B cell (primary cell): ENCODE measurements at regions of chr7 and their contacts with region 1.

Region 1: DNA sequence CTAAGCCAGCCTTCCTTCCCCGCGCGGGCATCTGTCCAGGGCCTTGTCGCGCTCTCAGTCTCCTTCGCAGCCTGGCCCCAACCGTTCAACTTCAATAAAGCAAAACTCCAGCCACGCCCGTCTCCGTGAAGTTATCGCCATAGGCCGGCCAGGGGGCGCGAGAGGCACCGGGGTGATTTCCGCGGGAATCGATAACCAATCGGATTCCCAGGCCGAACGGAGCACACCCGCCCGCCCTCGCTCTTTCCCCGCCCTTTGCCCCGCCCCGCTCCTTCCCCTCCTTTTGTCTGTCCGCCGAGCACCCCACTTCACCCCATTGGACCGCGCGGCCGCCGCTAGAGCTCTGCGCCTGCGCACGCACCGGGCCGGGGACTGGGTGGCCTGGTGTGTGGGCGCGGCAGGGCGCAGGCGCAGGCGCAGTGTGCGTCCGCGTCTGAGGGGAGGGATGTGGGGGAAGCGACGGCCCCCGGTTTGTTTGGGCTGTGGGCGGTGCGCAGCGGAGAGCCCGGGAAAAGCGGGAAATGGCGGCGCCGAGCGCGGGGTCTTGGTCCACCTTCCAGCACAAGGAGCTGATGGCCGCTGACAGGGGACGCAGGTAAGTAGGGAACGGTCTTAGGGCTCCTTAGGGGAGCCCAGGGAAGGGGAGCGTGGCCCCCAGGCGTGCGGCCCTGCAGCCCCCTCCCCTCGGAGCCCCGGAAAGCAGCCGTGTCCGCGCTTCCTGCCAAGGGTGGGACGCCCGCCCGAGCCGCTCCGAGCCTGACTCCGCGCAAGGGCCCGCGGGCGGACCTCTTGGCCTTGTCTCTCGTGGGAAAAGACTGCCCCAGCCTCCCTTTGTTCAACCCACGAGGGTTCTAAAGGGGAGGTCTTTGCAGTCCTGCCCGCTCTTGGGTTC is at the start of gene CASP2:
- DNase-seq: peak; percentile 99
- ATAC-seq: peak; percentile 90
- H3K4me3 ChIP-seq: peak within 1 kb of the TSS; percentile 73 to 95 (median 91)
- H3K4me3 Mint-ChIP-seq: peak within 1 kb of the TSS; percentile 95
- H3K27ac ChIP-seq: peak within 1 kb of the TSS; percentile 82 to 86
- H3K27ac Mint-ChIP-seq: peak within 1 kb of the TSS; percentile 84
- H3K4me1 ChIP-seq: peaks cover 42 to 43% of the 10 kb centered on the region in 2 donors
- H3K4me1 Mint-ChIP-seq: peaks cover 59% of the 10 kb centered on the region
- H3K27me3 ChIP-seq: no peaks in the 10 kb centered on the region
- H3K27me3 Mint-ChIP-seq: no peaks in the 10 kb centered on the region
- CTCF ChIP-seq: peak; percentile 36
- total RNA-seq, gene CASP2: 66.5 and 71.1 TPM in 2 replicates

Region 2: GRCh38 chr7:143263266-143264195 is 24.6 kb before region 1 on chr7 and contains the start of gene GSTK1:
- CTCF ChIA-PET with region 1: interaction called, 3 read pairs
- POLR2A ChIA-PET with region 1: interaction called, 10 read pairs
- intact Hi-C with region 1: loop called (anchors 1 kb)
- DNase-seq: peak; percentile 71
- ATAC-seq: peak; percentile 95
- H3K4me3 ChIP-seq: peak within 1 kb of the TSS; percentile 73 to 99 (median 90)
- H3K4me3 Mint-ChIP-seq: peak within 1 kb of the TSS; percentile 93
- H3K27ac ChIP-seq: peak within 1 kb of the TSS; percentile 80 to 82
- H3K27ac Mint-ChIP-seq: peak within 1 kb of the TSS; percentile 91
- H3K4me1 ChIP-seq: peaks cover 28 to 38% of the 10 kb centered on the region in 2 donors
- H3K4me1 Mint-ChIP-seq: peaks cover 52% of the 10 kb centered on the region
- H3K27me3 ChIP-seq: no peaks in the 10 kb centered on the region
- H3K27me3 Mint-ChIP-seq: no peaks in the 10 kb centered on the region
- CTCF ChIP-seq: no peak
- total RNA-seq, gene GSTK1: 181 and 183 TPM in 2 replicates

Region 3: DNA sequence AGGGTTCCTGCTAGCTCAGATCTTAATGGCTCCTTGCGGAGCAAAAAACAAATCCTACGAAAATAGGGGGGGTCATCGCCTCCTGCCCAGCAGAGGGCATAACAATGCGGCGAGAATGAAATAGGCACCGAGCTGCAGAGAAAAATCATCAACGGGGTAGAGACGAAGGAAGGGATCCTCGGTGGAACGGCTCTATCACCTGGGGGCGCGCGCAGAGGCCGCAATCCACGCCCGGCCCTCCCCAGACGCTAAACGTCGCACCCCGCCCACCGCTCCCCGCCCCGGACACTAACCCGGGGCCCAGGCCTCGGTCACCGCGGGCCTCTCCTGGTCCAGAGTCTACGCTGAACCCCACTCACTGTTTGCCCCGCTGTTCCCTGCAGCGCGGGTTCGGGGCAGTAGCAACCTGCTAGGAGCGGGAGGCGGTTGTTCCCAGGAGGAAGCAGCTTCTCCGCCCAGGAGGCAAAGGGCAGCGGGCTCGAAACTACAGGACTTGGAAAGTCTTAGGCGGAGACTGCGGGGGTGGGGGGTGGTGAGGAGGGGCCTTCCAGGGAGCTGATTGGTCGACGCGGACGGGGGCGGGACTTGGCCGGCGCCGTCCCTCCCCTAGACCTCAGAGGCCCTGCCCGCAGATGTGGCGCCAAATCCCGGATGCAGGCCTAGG is 613.6 kb after region 1 on chr7 and contains the start of gene TCAF1:
- CTCF ChIA-PET with region 1: no interaction called
- POLR2A ChIA-PET with region 1: no interaction called
- intact Hi-C with region 1: loop called (anchors 5 kb)
- DNase-seq: peak; percentile 92
- ATAC-seq: peak; percentile 95
- H3K4me3 ChIP-seq: peak within 1 kb of the TSS; percentile 59 to 96 (median 87)
- H3K4me3 Mint-ChIP-seq: peak within 1 kb of the TSS; percentile 99
- H3K27ac ChIP-seq: peak within 1 kb of the TSS; percentile 34 to 67
- H3K27ac Mint-ChIP-seq: peak within 1 kb of the TSS; percentile 95
- H3K4me1 ChIP-seq: peaks cover 6 to 10% of the 10 kb centered on the region in 2 donors
- H3K4me1 Mint-ChIP-seq: peaks cover 24% of the 10 kb centered on the region
- H3K27me3 ChIP-seq: no peaks in the 10 kb centered on the region
- H3K27me3 Mint-ChIP-seq: no peaks in the 10 kb centered on the region
- CTCF ChIP-seq: peak; percentile 42
- total RNA-seq, gene TCAF1: 17.3 and 19.7 TPM in 2 replicates